ENCODE measurements at regions of chr6 and their contacts with region 1.

Region 1: DNA sequence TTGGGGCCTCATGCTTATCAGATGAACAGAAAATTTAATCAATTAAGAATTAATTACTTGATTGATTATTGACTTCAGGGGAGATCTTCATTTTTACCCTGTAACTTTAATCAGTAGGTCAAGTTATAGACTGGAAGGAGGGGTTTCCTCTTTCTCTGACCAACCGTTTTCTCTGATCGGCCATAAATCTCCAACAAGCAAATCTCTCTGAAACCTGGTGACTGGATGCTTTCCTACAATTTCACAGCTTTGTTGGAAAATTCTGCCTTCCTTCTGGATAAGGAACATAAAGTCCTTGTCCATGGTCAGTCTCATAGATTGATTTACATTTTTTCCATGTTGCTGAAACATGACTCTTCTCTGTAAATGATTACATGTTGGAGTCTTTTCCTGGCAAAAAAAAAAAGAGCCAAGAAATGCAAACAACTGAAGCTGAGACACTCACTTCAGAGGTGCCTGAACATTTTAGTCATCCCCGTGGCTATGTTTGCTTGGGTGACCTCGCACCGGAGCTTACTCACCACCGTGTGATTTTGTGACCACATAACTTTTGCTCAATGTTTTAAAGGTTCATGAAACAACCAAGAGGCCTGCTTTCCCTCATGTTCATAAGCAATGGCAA is 31.0 kb downstream of the IRF4 start:
- DNase-seq: peak; percentile 44 to 55
- ATAC-seq: peak; percentile 87 to 100 (median 96)
- H3K4me3 ChIP-seq: no peak overlapping the region
- H3K4me3 Mint-ChIP-seq: no peak overlapping the region
- H3K27ac ChIP-seq: no peak overlapping the region
- H3K27ac Mint-ChIP-seq: peak overlapping the region in 1 of 2 donors; percentile 79
- H3K4me1 ChIP-seq: peaks cover 23% of the 10 kb centered on the region
- H3K4me1 Mint-ChIP-seq: peaks cover 14 to 19% of the 10 kb centered on the region in 2 donors
- H3K27me3 ChIP-seq: no peaks in the 10 kb centered on the region
- H3K27me3 Mint-ChIP-seq: peaks cover 0 to 4% of the 10 kb centered on the region in 2 donors
- CTCF ChIP-seq: no peak

Region 2: DNA sequence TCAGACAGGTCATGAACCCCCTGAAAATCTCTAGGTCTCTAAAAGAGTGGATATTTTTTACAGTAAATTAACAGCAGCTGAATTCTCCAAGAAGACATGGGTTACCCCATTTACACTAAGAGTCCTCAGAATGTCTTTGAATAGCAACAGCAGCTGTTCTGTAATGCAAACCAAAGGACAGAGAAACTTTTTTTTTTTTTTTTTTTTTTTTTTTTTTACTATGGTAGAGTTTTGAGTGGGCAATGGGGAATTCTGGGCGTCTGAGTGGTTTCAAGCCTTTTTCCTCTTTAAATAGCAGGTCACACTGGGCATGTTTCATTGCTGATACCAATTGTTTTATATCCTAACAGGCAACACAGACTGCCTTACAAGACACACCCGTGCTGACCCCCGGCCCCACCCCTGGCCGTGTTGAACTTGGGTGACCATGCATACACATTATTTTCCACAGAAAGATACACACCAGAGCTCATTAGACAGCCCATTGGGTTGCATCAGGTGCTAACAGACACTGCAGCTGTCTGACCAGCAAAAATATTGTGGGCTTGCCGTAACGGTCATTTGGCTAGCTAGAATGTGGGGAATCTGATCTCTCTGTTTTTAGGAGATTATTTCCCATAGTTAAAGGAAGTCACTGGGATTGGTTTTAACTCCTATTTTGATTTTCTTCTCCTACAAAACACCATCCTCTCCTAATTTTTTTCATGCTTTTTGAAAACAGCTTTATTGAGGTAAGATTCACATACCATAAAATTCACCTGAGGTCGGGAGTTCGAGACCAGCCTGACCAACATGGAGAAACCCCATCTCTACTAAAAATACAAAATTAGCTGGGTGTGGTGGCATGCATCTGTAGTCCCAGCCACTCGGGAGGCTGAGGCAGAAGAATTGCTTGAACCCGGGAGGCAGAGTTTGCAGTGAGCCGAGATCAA is 57.7 kb before region 1 on chr6:
- intact Hi-C with region 1: no loop called
- DNase-seq: no peak
- ATAC-seq: no peak
- H3K4me3 ChIP-seq: no peak overlapping the region
- H3K4me3 Mint-ChIP-seq: no peak overlapping the region
- H3K27ac ChIP-seq: no peak overlapping the region
- H3K27ac Mint-ChIP-seq: no peak overlapping the region
- H3K4me1 ChIP-seq: peaks cover 6% of the 10 kb centered on the region
- H3K4me1 Mint-ChIP-seq: peaks cover 0 to 10% of the 10 kb centered on the region in 2 donors
- H3K27me3 ChIP-seq: no peaks in the 10 kb centered on the region
- H3K27me3 Mint-ChIP-seq: peaks cover 3 to 10% of the 10 kb centered on the region in 2 donors
- CTCF ChIP-seq: no peak

Region 3: GRCh38 chr6:474453-475185 is 52.1 kb after region 1 on chr6:
- intact Hi-C with region 1: loop called (anchors 10 kb)
- DNase-seq: peak; percentile 63 to 82
- ATAC-seq: peak; percentile 96 to 100 (median 98)
- H3K4me3 ChIP-seq: peak overlapping the region; percentile 11
- H3K4me3 Mint-ChIP-seq: peak overlapping the region; percentile 68
- H3K27ac ChIP-seq: peak overlapping the region; percentile 33
- H3K27ac Mint-ChIP-seq: peak overlapping the region; percentile 8 to 16
- H3K4me1 ChIP-seq: peaks cover 24% of the 10 kb centered on the region
- H3K4me1 Mint-ChIP-seq: peaks cover 32 to 33% of the 10 kb centered on the region in 2 donors
- H3K27me3 ChIP-seq: no peaks in the 10 kb centered on the region
- H3K27me3 Mint-ChIP-seq: no peaks in the 10 kb centered on the region
- CTCF ChIP-seq: no peak

Measured in natural killer cell (primary cell).